ENCODE measurements at regions of chr9 and their contacts with region 1.

Region 1: DNA sequence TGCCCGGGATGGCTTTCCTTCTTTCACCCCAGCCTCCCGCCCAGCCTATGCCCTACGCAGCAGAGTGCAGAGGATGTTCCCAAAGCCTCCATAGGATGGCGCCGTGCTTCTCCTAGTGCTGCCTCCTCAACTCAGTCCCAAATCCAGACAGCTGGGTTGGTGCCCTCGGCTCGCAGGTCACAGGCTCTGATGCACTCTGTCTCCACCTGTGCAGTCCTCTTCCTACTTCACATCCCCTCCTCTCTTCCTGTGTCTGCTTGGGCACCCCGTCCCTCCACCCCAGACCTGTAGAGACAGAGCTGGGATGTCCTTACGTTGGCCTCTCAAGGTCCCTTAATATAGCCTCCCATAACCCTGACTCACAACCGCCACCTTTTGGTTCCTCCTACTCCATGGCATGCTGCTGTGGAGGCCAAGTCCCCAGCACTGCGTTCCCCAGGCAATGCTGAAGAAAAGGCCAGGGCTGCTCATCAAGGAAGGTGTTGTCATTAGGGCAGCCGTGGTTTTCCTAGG is 314.4 kb downstream of the GADD45G start:
- DNase-seq: peak; percentile 50
- ATAC-seq: peak; percentile 93

Region 2: DNA sequence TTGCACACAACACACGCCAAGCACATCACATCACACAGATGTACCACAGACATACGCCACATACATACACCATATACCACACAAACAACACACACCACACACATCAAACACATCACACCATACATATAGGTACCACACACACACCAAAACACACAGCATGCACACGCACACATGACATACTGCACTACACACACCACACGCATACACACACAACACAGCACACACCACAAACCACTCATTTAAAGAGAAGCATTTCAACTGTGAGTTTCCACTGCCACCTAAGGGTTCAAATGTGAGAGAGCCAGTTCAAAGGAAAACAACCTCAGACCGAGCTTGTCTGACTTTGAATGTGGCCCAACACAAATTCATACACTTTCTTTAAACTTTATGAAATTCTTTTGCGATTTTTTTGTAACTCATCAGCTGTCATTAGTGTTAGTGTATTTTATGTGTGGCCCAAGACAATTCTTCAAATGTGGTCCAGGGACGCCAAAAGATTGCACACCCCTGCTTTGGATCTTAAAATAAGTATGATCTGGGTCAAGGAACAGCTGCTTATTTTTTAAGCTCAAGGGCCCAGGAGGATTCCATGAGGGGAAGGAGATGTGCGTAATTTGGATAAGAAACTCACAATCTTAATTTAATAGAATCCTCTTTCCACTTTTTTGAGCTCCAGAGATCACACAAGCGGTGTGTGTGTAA is 180.2 kb after region 1 on chr9:
- intact Hi-C with region 1: loop called (anchors 5 kb)
- DNase-seq: no peak
- ATAC-seq: peak; percentile 56